Activated CD4-positive, alpha-beta memory T cell treated with anti-CD3 and anti-CD28 coated beads, Interleukin-2, amount 10 ng/mL, durations not matched to agents 7 days and 5 days (primary cell): ENCODE measurements at regions of chr12 and their contacts with region 1.

Region 1: DNA sequence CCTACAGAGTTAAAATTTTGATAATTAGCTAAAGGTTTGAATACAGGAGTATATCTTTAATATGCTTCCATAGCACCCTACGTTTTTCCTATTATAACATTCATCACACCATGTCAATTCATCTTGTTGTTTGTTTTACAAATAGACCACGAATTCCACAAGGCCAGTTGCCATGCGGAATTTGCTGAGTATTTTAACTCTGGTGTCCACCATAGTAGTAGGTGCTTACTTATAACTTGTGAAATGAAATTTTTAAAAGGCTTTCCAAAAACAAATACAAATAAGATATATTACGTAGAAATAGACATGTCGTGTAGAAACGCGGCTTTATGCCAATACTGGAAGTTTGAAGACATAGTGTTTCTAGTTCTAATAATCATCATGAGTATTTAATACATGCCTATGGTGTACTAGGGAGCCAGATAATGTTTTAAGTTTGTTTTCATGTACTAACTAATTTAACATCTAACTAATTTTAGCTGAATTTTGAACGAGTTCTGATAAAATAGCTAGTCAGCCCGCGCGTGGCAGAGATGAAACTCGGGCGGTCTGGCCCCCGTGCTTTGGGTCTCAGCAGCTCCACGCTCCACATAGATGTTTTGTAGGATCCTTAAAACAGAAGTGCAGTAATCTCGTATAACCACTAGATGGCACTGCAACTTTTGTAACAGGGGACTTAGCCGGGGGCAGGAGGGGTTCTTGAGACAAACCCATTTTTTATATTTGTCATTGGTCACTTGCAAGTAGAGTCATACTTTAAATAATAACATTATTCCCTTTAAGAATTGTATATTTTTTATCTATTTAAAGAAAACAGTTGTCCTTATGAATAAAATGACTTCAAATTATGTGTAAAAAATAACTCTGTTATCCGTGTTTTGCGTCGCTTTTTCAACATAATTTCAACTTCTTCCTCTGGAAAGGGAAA is 10.2 kb downstream of the CD69 start:
- DNase-seq: peak; percentile 61
- H3K4me3 Mint-ChIP-seq: peak overlapping the region; percentile 15
- H3K27ac Mint-ChIP-seq: peak overlapping the region; percentile 5
- H3K4me1 Mint-ChIP-seq: peaks cover 55% of the 10 kb centered on the region
- H3K27me3 Mint-ChIP-seq: no peaks in the 10 kb centered on the region

Region 2: GRCh38 chr12:9773216-9773877 is 22.8 kb after region 1 on chr12:
- CTCF ChIA-PET with region 1: interaction called, 16 read pairs
- POLR2A ChIA-PET with region 1: interaction called, 196 read pairs
- DNase-seq: no peak
- H3K4me3 Mint-ChIP-seq: peak overlapping the region; percentile 41
- H3K27ac Mint-ChIP-seq: peak overlapping the region; percentile 71
- H3K4me1 Mint-ChIP-seq: peaks cover 83% of the 10 kb centered on the region
- H3K27me3 Mint-ChIP-seq: no peaks in the 10 kb centered on the region

Region 3: GRCh38 chr12:9797722-9798619 is 47.4 kb after region 1 on chr12:
- CTCF ChIA-PET with region 1: interaction called, 587 read pairs
- POLR2A ChIA-PET with region 1: interaction called, 812 read pairs
- DNase-seq: peak; percentile 76
- H3K4me3 Mint-ChIP-seq: no peak overlapping the region
- H3K27ac Mint-ChIP-seq: peak overlapping the region; percentile 92
- H3K4me1 Mint-ChIP-seq: peaks cover 47% of the 10 kb centered on the region
- H3K27me3 Mint-ChIP-seq: peaks cover 15% of the 10 kb centered on the region

Region 4: DNA sequence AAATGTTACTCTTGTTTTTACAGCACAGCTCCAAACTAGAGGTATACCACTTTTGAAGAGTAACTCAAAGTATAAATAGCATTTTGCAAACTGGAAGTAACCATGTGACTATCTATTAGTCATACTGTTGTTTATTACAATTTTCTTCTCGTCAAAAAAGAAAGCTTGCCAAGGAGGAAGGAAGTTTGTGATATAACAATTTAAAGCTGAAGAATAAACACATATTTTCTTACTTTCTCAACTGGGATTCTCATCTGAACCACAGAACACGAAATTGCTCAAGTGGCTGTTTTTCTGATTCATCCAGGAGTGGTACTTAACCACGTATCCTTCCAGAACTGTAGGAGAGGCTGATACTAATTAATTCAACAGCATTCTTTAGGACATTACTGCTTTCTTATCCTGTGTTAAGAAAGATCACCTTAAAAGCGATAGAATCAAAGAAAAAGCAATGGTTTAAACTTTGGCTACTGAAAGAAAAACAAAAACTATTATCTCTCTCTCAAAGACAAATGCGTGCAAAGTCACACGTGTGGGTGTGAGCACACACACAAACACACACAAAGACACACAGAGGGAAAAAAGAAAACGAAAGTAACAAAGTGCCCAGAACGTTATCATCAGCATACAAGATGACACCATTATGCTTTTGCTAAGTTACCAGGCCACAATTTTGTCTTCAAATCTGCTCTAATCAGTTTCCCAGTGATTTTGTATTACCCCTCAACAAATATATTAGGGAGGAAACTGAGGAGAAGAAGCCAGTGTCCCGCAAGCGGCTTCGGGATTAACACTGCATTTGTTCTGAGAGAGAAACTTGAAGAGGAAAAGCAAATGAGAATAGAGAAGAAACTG is 119.0 kb after region 1 on chr12 and contains the start of gene CLEC2B:
- CTCF ChIA-PET with region 1: interaction called, 34 read pairs
- POLR2A ChIA-PET with region 1: interaction called, 298 read pairs
- DNase-seq: no peak
- H3K4me3 Mint-ChIP-seq: peak within 1 kb of the TSS; percentile 85
- H3K27ac Mint-ChIP-seq: peak within 1 kb of the TSS; percentile 92
- H3K4me1 Mint-ChIP-seq: peaks cover 19% of the 10 kb centered on the region
- H3K27me3 Mint-ChIP-seq: no peaks in the 10 kb centered on the region
- total RNA-seq, gene CLEC2B: 79.6 to 79.7 TPM

Region 5: GRCh38 chr12:10140001-10140400 is 389.5 kb after region 1 on chr12:
- CTCF ChIA-PET with region 1: interaction called, 14 read pairs
- POLR2A ChIA-PET with region 1: no interaction called
- DNase-seq: peak; percentile 54
- H3K4me3 Mint-ChIP-seq: no peak overlapping the region
- H3K27ac Mint-ChIP-seq: no peak overlapping the region
- H3K4me1 Mint-ChIP-seq: no peaks in the 10 kb centered on the region
- H3K27me3 Mint-ChIP-seq: peaks cover 18% of the 10 kb centered on the region